ENCODE measurements at regions of chrX and their contacts with region 1.

Region 1: GRCh38 chrX:56563231-56564161 is at the start of gene UBQLN2:
- DNase-seq: peak; percentile 90
- ATAC-seq: peak; percentile 69
- H3K4me3 Mint-ChIP-seq: peak within 1 kb of the TSS; percentile 96
- H3K27ac Mint-ChIP-seq: peak within 1 kb of the TSS; percentile 100
- H3K4me1 Mint-ChIP-seq: peaks cover 2% of the 10 kb centered on the region
- H3K27me3 Mint-ChIP-seq: no peaks in the 10 kb centered on the region
- total RNA-seq, gene UBQLN2: 32.2 to 36.6 TPM

Region 2: DNA sequence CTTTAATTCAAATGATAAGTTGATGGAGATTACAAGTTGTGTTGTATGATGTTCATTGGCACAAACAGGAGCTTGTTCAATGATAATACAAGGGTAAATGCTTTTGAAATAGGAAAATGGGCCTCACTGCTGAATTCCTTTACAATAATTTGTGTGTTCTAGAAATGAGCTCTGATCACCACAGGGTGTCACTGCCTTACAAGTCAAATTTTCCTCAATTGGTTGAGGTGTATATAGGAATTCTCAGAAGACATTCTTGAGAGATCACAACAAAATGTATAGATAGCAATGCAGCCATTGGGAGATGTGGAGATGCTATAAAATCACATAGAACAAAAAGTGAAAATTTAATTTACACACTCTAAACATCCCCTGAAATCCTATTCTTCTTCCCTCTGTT is 281.7 kb before region 1 on chrX:
- CTCF ChIA-PET with region 1: no interaction called
- POLR2A ChIA-PET with region 1: no interaction called
- intact Hi-C with region 1: loop called in 1 of 2 experiments (anchors 5 kb)
- DNase-seq: no peak
- ATAC-seq: no peak
- H3K4me3 Mint-ChIP-seq: no peak overlapping the region
- H3K27ac Mint-ChIP-seq: no peak overlapping the region
- H3K4me1 Mint-ChIP-seq: peaks cover 6% of the 10 kb centered on the region
- H3K27me3 Mint-ChIP-seq: no peaks in the 10 kb centered on the region

Region 3: GRCh38 chrX:56397636-56398035 is 165.9 kb before region 1 on chrX:
- CTCF ChIA-PET with region 1: no interaction called
- POLR2A ChIA-PET with region 1: no interaction called
- intact Hi-C with region 1: loop called (anchors 5 kb)
- DNase-seq: peak; percentile 39
- ATAC-seq: peak; percentile 91
- H3K4me3 Mint-ChIP-seq: peak overlapping the region; percentile 19
- H3K27ac Mint-ChIP-seq: peak overlapping the region; percentile 83
- H3K4me1 Mint-ChIP-seq: peaks cover 27% of the 10 kb centered on the region
- H3K27me3 Mint-ChIP-seq: no peaks in the 10 kb centered on the region

Region 4: DNA sequence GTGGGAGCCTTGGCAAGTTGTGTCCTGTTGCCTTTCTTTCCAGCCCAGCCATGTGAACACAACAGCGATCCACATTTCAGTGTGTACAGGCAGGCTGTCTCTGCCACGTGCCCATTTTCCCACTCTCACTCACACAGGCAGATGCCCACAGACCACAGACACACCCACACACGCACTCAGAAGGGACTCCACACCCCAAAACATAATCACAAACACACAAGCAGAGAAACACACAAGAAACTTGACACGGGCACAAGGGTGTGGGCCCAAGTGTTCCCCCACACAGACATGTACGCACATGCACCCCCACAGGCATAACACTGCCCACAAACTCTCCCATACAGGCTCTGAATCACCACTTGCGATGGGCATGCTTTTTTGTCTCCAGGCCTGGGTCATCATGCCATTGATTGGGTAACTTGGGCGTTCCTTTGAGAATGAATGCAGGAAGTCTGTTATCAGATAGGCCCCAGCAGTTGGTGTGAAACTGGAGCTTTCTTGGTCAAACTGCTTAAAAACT is 249.9 kb after region 1 on chrX:
- CTCF ChIA-PET with region 1: no interaction called
- POLR2A ChIA-PET with region 1: no interaction called
- intact Hi-C with region 1: loop called in 1 of 2 experiments (anchors 5 kb)
- DNase-seq: peak; percentile 67
- ATAC-seq: peak; percentile 73
- H3K4me3 Mint-ChIP-seq: peak overlapping the region; percentile 67
- H3K27ac Mint-ChIP-seq: peak overlapping the region; percentile 99
- H3K4me1 Mint-ChIP-seq: peaks cover 47% of the 10 kb centered on the region
- H3K27me3 Mint-ChIP-seq: no peaks in the 10 kb centered on the region

Region 5: GRCh38 chrX:57595381-57595811 is 1031.9 kb after region 1 on chrX:
- CTCF ChIA-PET with region 1: no interaction called
- POLR2A ChIA-PET with region 1: no interaction called
- intact Hi-C with region 1: loop called in 1 of 2 experiments (anchors 5 kb)
- DNase-seq: no peak
- ATAC-seq: no peak
- H3K4me3 Mint-ChIP-seq: peak overlapping the region; percentile 69
- H3K27ac Mint-ChIP-seq: peak overlapping the region; percentile 80
- H3K4me1 Mint-ChIP-seq: peaks cover 34% of the 10 kb centered on the region
- H3K27me3 Mint-ChIP-seq: no peaks in the 10 kb centered on the region

Measured in activated CD4-positive, alpha-beta T cell treated with anti-CD3 and anti-CD28 coated beads for 36 hours (primary cell).